Activated CD4-positive, alpha-beta T cell treated with anti-CD3 and anti-CD28 coated beads for 36 hours (primary cell): ENCODE measurements at regions of chr7 and their contacts with region 1.

Region 1: GRCh38 chr7:100435401-100436304 is 644 bp downstream of the PPP1R35 start:
- DNase-seq: peak; percentile 70
- ATAC-seq: peak; percentile 30
- H3K4me3 Mint-ChIP-seq: peak overlapping the region; percentile 89
- H3K27ac Mint-ChIP-seq: peak overlapping the region; percentile 88
- H3K4me1 Mint-ChIP-seq: peaks cover 43% of the 10 kb centered on the region
- H3K27me3 Mint-ChIP-seq: no peaks in the 10 kb centered on the region

Region 2: DNA sequence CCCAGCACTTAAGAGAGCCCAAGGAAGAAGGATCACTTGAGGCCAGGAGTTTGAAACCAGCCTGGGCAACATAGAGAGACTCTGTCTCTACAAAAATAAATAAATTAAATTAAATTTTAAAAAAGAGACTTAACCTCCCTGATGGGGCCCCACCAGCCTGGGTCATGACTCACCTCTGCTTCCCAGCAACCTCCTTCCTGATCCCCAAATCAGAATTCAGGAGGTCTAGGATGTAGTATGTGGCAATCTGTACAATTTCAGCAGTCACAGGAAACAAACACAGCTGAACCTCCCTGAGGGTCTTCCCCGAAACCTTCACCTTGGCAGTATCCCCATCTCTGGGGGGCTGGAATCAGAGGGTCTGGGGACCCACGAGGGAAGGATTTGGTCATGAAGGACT is 10.4 kb after region 1 on chr7:
- CTCF ChIA-PET with region 1: interaction called, 5 read pairs
- POLR2A ChIA-PET with region 1: interaction called, 3 read pairs
- intact Hi-C with region 1: loop called in 1 of 2 experiments (anchors 2 kb)
- DNase-seq: no peak
- ATAC-seq: no peak
- H3K4me3 Mint-ChIP-seq: no peak overlapping the region
- H3K27ac Mint-ChIP-seq: no peak overlapping the region
- H3K4me1 Mint-ChIP-seq: peaks cover 15% of the 10 kb centered on the region
- H3K27me3 Mint-ChIP-seq: no peaks in the 10 kb centered on the region

Region 3: GRCh38 chr7:100538654-100539435 is 103.2 kb after region 1 on chr7 and contains the start of gene AGFG2:
- CTCF ChIA-PET with region 1: no interaction called
- POLR2A ChIA-PET with region 1: no interaction called
- intact Hi-C with region 1: loop called in 1 of 2 experiments (anchors 1 kb)
- DNase-seq: peak; percentile 100
- ATAC-seq: peak; percentile 92
- H3K4me3 Mint-ChIP-seq: peak within 1 kb of the TSS; percentile 98
- H3K27ac Mint-ChIP-seq: peak within 1 kb of the TSS; percentile 95
- H3K4me1 Mint-ChIP-seq: peaks cover 42% of the 10 kb centered on the region
- H3K27me3 Mint-ChIP-seq: no peaks in the 10 kb centered on the region
- total RNA-seq, gene AGFG2: 49.3 to 49.4 TPM